Activated T-helper 2 cell treated with anti-CD3 and anti-CD28 coated beads, Interferon-gamma antibody, Interleukin-2, Interleukin-4, amounts not matched to agents 10 μg/mL and 5 μg/mL and 100 μg/mL, durations not matched to agents 14 hours and 24 hours and 36 hours (primary cell): ENCODE measurements at regions of chr1 and their contacts with region 1.

Region 1: GRCh38 chr1:181088079-181089016 is at the start of gene IER5:
- DNase-seq: peak; percentile 95
- H3K4me3 Mint-ChIP-seq: peak within 1 kb of the TSS; percentile 98
- H3K27ac Mint-ChIP-seq: peak within 1 kb of the TSS; percentile 99
- H3K4me1 Mint-ChIP-seq: peaks cover 47% of the 10 kb centered on the region
- H3K27me3 Mint-ChIP-seq: no peaks in the 10 kb centered on the region
- total RNA-seq, gene IER5: 44.3 and 44.6 TPM in 2 replicates

Region 2: DNA sequence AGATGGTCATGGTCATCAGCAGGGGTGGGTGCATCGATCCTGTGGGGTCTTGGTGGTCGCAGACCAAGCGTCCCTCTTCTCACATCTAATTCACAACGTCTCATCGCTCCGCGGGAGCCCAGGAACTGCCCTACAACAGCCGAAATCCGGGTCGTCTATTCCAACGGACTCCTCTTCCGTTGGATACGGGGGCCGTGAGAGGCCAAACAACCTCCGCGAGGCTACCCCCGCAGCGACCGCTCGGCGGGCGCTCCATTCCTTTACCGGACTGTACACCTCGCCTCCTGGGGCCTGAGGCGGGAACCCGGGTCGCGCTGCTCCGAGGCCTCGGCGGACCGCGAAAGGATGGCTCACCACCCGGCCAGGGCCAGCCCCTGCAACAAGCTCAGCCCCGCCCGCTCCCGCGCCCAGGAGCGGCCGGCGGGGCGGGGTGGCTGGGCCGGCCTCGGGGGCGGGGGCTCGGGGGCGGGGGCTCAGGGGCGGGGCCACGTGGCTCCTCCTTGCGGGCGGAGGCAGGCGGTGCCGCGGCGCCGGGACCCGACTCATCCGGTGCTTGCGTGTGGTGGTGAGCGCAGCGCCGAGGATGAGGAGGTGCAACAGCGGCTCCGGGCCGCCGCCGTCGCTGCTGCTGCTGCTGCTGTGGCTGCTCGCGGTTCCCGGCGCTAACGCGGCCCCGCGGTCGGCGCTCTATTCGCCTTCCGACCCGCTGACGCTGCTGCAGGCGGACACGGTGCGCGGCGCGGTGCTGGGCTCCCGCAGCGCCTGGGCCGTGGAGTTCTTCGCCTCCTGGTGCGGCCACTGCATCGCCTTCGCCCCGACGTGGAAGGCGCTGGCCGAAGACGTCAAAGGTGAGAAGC is 933.8 kb before region 1 on chr1 and contains the start of gene QSOX1:
- intact Hi-C with region 1: loop called (anchors 10 kb)
- DNase-seq: peak; percentile 86
- H3K4me3 Mint-ChIP-seq: peak within 1 kb of the TSS; percentile 89
- H3K27ac Mint-ChIP-seq: peak within 1 kb of the TSS; percentile 90
- H3K4me1 Mint-ChIP-seq: peaks cover 36% of the 10 kb centered on the region
- H3K27me3 Mint-ChIP-seq: peaks cover 3% of the 10 kb centered on the region
- total RNA-seq, gene QSOX1: 58.7 and 62.6 TPM in 2 replicates

Region 3: DNA sequence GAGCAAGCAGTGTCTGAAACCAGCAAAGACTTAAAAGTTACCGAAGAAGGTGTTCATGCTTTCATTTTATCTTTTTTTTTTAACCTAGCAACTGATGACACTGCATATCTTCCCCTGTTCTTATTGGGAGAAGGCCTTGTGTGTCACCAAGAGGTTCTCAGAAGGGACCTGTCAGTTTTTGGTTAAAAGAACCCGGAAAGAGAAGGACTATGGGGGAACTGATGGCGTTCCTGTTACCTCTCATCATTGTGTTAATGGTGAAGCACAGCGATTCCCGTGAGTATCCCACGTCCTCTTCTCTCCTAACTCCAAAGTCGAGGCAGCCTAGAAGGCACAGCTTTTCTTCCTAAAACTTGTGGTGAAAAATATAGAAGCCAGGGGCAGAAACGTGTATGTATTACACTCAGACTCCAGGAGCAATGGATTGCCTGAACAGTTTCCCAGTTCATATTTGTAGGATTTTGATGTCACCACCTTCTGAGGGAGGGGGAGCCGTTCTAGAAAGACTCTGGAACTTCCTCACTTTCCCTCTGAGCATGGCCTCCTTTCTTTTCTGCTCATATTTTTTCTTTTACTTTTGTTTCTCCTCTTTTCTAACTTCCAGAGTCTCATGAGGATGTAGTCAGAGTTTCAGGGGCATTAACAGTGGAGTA is 54.4 kb before region 1 on chr1 and contains the start of gene MR1:
- intact Hi-C with region 1: loop called (anchors 2 kb)
- DNase-seq: peak; percentile 42
- H3K4me3 Mint-ChIP-seq: peak within 1 kb of the TSS; percentile 93
- H3K27ac Mint-ChIP-seq: peak within 1 kb of the TSS; percentile 98
- H3K4me1 Mint-ChIP-seq: peaks cover 50% of the 10 kb centered on the region
- H3K27me3 Mint-ChIP-seq: peaks cover 2% of the 10 kb centered on the region
- total RNA-seq, gene MR1: 13.8 and 18.2 TPM in 2 replicates

Region 4: DNA sequence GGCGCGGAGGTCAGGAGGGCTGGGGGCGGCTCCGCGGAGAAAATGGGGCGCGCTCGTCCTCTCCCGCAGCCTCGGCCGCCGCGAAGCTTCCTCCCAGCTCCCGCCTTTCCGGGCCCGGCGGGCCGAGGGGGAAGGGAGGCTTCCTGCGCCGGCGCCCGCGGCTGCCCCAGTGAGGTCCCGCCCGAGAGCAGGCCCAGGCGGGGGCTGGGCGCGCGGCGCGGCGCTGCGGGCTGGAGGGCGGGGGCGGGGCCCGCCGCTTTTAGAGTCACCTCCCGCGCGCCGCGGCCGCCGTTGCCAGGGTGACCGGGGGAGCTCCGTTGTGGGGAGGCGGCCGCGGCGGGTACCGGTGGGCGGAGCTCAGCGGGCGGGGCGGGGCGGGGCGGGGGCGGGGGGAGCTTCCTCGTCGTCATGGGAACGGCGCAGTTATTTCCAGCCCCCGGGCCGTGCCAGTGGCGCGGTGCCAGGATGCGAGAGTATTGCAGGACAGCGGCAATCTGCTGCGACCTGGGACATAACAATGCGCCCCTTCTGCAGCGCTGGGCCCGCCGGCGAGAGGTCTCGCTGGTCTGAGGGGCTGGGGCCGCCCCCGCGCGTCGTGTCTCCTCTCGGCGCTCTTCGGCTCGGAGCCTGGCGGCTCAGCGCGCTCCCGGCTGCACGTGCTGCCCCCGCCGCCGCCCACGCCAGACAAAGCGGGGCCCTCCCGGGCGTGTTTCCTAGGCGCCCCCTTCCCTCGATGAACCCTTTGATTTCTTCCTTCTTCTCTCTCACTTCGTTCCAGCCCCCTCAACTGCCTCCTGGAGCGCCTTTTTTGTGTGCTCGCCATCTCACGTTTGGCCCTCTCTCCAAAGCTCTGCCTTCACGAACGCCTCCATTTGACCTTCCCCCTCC is 17.0 kb after region 1 on chr1:
- intact Hi-C with region 1: loop called (anchors 1 kb)
- DNase-seq: peak; percentile 88
- H3K4me3 Mint-ChIP-seq: peak overlapping the region; percentile 85
- H3K27ac Mint-ChIP-seq: peak overlapping the region; percentile 79
- H3K4me1 Mint-ChIP-seq: peaks cover 59% of the 10 kb centered on the region
- H3K27me3 Mint-ChIP-seq: peaks cover 27% of the 10 kb centered on the region

Region 5: GRCh38 chr1:181166377-181167196 is 78.2 kb after region 1 on chr1:
- intact Hi-C with region 1: loop called (anchors 1 kb)
- DNase-seq: peak; percentile 69
- H3K4me3 Mint-ChIP-seq: no peak overlapping the region
- H3K27ac Mint-ChIP-seq: no peak overlapping the region
- H3K4me1 Mint-ChIP-seq: peaks cover 5% of the 10 kb centered on the region
- H3K27me3 Mint-ChIP-seq: peaks cover 11% of the 10 kb centered on the region